Heart right ventricle (tissue), 16 donors: ENCODE measurements at regions of chr1 and their contacts with region 1.

Region 1: DNA sequence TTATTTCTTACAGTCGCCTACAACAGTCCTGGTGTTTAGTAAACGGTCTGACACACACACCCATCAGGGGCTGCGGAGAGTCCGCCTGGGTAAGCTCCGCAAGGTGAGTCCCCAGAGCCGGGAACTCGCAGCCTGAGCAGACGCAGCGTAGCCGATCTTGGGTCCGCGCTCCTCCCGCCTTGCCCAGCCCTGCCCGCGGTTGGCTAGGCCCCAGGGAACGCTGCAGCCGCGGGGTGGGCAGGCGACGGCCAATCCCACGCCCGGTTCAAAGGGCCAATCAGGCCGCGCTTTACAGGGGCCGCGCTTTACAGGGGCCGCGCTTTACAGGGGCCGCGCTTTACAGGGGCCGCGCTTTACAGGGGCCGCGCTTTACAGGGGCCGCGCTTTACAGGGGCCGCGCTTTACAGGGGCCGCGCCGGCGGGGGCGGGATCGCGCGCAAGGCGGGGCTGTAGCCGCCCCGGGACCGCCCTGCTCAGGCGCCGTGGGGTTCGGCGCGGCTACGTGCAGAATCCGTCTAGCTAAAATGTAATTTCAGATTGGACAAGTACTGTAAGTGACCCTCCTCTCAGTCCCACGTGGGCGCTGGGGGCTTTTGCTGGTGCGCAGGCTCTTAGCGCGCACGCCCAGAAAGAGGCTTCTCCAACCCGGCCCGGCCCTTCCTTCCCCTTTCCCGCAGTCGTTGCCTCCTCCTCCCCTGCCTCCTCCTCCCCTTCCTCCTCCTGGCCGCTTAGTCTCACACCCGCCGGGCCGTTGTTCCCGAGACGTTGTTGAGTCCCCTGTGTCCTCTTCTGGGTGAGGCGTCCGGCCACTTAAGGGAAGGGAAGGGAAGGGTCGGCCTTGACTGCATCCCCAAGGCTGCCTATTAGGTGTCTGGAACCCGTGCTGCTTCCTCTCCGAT is at the start of gene FGGY:
- DNase-seq: peak; percentile 97 to 99
- ATAC-seq: peak; percentile 93 to 98 (median 94)
- H3K4me3 ChIP-seq: peak within 1 kb of the TSS; percentile 45 to 68 (median 61)
- H3K27ac ChIP-seq: peak within 1 kb of the TSS; percentile 92 to 99 (median 97)
- H3K4me1 ChIP-seq: peaks cover 0 to 50% (median 17%) of the 10 kb centered on the region in 9 donors
- H3K27me3 ChIP-seq: no peaks in the 10 kb centered on the region
- CTCF ChIP-seq: peak in 1 of 9 donors; percentile 6
- total RNA-seq, gene FGGY: 26.3 to 51.8 (median 36.6) TPM

Region 2: GRCh38 chr1:58816072-58816746 is 480.4 kb before region 1 on chr1:
- intact Hi-C with region 1: loop called in 1 of 10 experiments (anchors 10 kb)
- DNase-seq: peak; percentile 90 to 93
- ATAC-seq: peak; percentile 85 to 95 (median 92)
- H3K4me3 ChIP-seq: peak overlapping the region; percentile 39 to 67 (median 59)
- H3K27ac ChIP-seq: peak overlapping the region; percentile 80 to 97 (median 90)
- H3K4me1 ChIP-seq: peaks cover 0 to 74% (median 32%) of the 10 kb centered on the region in 9 donors
- H3K27me3 ChIP-seq: no peaks in the 10 kb centered on the region
- CTCF ChIP-seq: peak in 6 of 9 donors; percentile 8 to 35 (median 19)

Region 3: GRCh38 chr1:58982259-58982998 is 314.2 kb before region 1 on chr1:
- intact Hi-C with region 1: loop called in 2 of 10 experiments (anchors 5 to 10 kb)
- DNase-seq: peak; percentile 34 to 40
- ATAC-seq: peak; percentile 39 to 97 (median 84)
- H3K4me3 ChIP-seq: no peak overlapping the region
- H3K27ac ChIP-seq: peak overlapping the region in 9 of 10 donors; percentile 24 to 68 (median 52)
- H3K4me1 ChIP-seq: peaks cover 5 to 34% (median 27%) of the 10 kb centered on the region in 9 donors
- H3K27me3 ChIP-seq: no peaks in the 10 kb centered on the region
- CTCF ChIP-seq: no peak

Region 4: DNA sequence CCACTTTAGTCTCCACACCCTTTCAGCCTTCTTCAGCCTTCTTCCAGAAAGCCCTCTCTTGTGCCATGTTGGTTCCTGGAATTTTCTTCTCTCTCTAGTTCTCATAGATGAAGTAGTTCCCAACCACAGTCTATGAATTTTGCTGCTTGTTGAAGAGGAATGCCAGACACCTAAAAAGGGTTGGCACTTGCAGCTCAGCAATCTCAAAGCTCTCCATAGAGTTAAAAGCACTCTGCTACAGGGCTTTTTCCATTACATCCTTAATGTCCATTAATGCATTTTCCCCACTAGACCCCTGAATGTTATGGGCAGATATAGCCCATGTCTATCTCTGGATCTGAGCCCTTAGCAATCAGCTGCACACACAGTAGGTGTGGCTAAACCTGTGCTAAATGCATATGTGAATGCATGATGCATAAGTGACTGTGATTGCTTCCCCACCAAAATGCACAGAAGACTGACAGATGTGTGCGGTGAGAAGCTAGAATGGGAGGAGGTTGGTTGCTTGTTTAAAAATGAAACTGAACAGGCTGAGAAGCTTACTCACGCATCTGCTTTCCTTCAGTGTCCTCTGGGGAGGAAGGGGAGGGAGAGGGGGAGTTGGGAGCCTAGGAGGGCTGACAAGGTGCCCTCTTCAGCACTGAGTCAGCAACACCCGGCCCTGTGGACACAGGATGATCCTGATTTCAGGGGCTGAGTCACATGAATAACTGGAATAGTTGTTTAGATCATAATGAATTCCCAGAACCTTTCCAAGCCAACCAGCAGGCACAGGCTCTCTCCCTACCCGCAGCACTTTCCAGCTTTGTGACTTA is 145.8 kb before region 1 on chr1:
- intact Hi-C with region 1: loop called in 6 of 10 experiments (anchors 1 to 10 kb)
- DNase-seq: peak; percentile 67 to 86
- ATAC-seq: peak; percentile 85 to 98 (median 94)
- H3K4me3 ChIP-seq: peak overlapping the region in 6 of 10 donors; percentile 1 to 39 (median 21)
- H3K27ac ChIP-seq: peak overlapping the region; percentile 49 to 89 (median 78)
- H3K4me1 ChIP-seq: peaks cover 9 to 44% (median 36%) of the 10 kb centered on the region in 9 donors
- H3K27me3 ChIP-seq: no peaks in the 10 kb centered on the region
- CTCF ChIP-seq: no peak

Region 5: DNA sequence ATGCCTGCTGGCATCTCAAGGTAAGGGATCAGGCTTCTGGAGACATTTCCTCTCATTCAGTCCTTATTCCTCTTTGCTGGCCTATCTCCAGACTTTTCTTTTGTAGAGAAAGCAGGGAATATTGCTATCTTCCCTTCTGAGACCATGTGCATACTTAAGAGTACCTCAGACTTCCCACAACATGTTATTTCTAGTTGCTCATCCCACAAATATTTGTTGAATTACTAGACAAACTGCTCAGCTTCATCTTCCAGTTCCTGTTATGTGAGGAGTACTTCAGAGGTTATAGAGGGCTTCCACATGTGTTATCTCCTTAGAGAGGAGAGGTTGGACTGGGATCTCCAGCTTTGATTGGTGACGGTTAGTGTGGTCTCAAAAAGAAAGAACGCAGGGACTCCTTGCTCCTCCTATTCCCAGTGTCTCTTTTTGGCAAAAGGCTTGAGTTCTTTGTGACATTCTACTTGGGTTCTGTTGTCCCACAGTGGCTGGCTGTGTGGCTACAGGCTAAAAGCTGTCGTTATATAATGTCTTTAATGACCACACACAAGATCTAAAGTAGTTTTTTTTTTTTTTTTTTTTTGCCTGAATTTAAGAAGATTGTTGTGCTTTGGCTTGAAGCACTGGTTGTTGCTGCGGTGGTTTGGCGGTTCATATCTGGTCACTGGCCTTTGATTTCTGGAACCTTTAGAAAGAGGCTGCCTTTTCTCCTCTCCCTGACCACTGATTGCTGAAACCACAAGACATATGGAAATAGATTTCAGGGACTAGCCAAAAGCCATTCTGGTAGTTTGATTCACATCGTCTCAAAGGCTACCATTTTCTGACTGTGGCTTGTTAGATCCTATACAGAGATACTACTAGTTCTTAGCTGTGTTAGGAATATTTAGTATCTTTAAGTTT is 79.0 kb after region 1 on chr1:
- intact Hi-C with region 1: no loop called
- DNase-seq: no peak
- ATAC-seq: peak in 6 of 8 donors; percentile 45 to 83 (median 64)
- H3K4me3 ChIP-seq: no peak overlapping the region
- H3K27ac ChIP-seq: peak overlapping the region in 6 of 10 donors; percentile 0 to 63 (median 44)
- H3K4me1 ChIP-seq: peaks cover 0 to 6% (median 0%) of the 10 kb centered on the region in 9 donors
- H3K27me3 ChIP-seq: no peaks in the 10 kb centered on the region
- CTCF ChIP-seq: no peak

Region 6: GRCh38 chr1:59699227-59699847 is 402.7 kb after region 1 on chr1:
- intact Hi-C with region 1: loop called in 5 of 10 experiments (anchors 5 to 10 kb)
- DNase-seq: no peak
- ATAC-seq: peak in 7 of 8 donors; percentile 34 to 67 (median 41)
- H3K4me3 ChIP-seq: no peak overlapping the region
- H3K27ac ChIP-seq: peak overlapping the region in 2 of 10 donors; percentile 19 to 68
- H3K4me1 ChIP-seq: peaks cover 6 to 58% (median 29%) of the 10 kb centered on the region in 9 donors
- H3K27me3 ChIP-seq: no peaks in the 10 kb centered on the region
- CTCF ChIP-seq: peak; percentile 90 to 98 (median 94)